MCF 10A (cell line): ENCODE measurements at regions of chr7 and their contacts with region 1.

Region 1: GRCh38 chr7:26853788-26854393 is 10.5 kb downstream of the SKAP2 start:
- DNase-seq: peak; percentile 78
- H3K4me3 Mint-ChIP-seq: peak overlapping the region; percentile 17
- H3K27ac Mint-ChIP-seq: peak overlapping the region; percentile 96
- H3K4me1 Mint-ChIP-seq: peaks cover 33% of the 10 kb centered on the region
- H3K27me3 Mint-ChIP-seq: no peaks in the 10 kb centered on the region
- CTCF ChIP-seq: peak; percentile 52

Region 2: GRCh38 chr7:26686448-26686981 is 167.4 kb before region 1 on chr7:
- CTCF ChIA-PET with region 1: interaction called, 14 read pairs
- POLR2A ChIA-PET with region 1: interaction called, 10 read pairs
- intact Hi-C with region 1: loop called (anchors 2 kb)
- DNase-seq: peak; percentile 51
- H3K4me3 Mint-ChIP-seq: no peak overlapping the region
- H3K27ac Mint-ChIP-seq: no peak overlapping the region
- H3K4me1 Mint-ChIP-seq: peaks cover 3% of the 10 kb centered on the region
- H3K27me3 Mint-ChIP-seq: no peaks in the 10 kb centered on the region
- CTCF ChIP-seq: peak; percentile 59

Region 3: DNA sequence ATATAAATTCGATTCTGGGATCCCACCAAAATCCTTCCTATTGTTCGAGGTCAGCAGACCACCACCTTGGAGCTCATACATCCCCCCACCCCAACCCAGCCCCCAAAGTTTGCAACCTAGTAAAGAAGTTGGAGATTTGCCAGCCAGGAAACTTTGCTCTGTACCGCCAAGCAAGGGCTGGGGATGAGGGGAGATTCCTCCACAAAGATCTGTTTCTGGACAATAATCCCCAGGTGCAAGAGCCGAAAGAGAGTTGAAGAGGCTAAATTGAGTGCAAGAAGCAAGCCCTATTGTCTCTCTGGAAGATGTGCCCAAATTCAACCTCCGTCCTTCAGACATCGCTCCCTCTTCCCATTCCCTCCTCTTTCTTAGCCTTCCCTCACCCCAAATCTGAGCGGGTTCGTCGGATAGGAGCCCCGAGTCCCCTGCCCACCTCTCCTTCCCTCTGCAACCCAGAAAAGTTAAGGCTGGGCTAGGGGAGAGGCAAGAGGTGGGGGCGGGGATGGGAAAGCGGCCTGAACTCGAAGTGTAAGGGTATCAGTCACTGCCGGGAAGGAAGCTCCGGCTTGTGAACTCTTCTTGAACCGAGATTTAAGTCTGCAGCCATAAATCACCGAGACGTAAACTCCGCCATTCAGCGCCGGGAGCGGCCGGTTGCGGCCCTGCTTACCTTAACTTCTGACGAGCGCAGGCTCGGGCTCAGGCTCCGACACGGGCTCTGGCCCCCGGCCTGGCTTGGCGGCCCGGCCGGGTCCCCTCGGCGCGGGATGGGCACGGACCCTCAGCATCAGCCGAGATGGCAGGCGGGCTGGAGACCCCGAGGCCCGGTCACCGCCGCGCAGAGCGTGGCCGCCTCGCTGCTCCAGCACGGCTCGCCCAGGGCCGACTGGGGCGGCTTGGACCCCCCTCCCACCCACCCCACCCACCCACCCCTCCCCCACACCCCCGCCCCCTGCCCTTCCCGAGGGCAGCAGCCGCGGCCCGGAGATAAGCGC is 259.4 kb after region 1 on chr7:
- CTCF ChIA-PET with region 1: interaction called, 12 read pairs
- POLR2A ChIA-PET with region 1: interaction called, 395 read pairs
- intact Hi-C with region 1: no loop called
- DNase-seq: peak; percentile 93
- H3K4me3 Mint-ChIP-seq: peak overlapping the region; percentile 80
- H3K27ac Mint-ChIP-seq: peak overlapping the region; percentile 90
- H3K4me1 Mint-ChIP-seq: peaks cover 25% of the 10 kb centered on the region
- H3K27me3 Mint-ChIP-seq: no peaks in the 10 kb centered on the region
- CTCF ChIP-seq: no peak

Region 4: DNA sequence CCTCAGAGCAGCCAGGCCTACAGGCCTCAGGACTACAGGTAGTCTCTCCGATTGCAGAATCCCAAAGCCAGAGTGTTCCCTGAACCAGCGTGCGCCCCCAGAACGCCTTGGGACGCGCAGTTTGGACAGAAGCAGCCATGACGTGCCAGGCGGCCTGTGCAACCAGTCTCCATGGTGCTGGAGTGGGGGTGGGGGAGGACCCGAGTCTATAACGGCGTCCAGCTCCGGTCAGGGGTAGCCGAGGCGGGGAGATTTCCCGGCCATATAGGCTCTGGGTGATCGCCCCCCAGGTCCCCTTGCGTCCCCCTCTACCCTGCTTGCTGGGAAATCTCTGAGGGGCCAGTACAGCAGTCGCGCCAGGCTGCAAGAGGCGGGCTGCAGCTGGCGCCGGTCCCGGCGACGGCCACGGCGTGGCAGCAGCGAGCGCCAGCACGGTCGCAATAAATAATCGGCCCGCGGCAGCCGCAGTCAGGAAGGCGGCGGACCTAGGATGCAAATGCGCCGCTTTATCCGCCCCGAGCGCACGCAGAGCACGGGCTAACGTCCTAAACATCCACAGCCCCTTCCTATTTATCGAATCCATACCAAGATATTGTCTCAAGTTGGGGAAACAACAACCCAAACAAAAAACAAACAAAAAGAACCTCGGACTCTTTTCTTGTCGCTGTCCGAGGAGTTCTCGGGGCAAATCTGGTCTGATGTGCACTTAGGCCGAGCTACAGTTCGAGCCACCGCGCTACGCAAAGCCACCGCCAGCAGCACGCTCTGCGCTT is 296.9 kb after region 1 on chr7:
- CTCF ChIA-PET with region 1: interaction called, 17 read pairs
- POLR2A ChIA-PET with region 1: interaction called, 459 read pairs
- intact Hi-C with region 1: no loop called
- DNase-seq: peak; percentile 72
- H3K4me3 Mint-ChIP-seq: peak overlapping the region; percentile 79
- H3K27ac Mint-ChIP-seq: no peak overlapping the region
- H3K4me1 Mint-ChIP-seq: peaks cover 15% of the 10 kb centered on the region
- H3K27me3 Mint-ChIP-seq: no peaks in the 10 kb centered on the region
- CTCF ChIP-seq: peak; percentile 89

Region 5: GRCh38 chr7:27172823-27173510 is 319.1 kb after region 1 on chr7:
- CTCF ChIA-PET with region 1: interaction called, 5 read pairs
- POLR2A ChIA-PET with region 1: interaction called, 59 read pairs
- intact Hi-C with region 1: no loop called
- DNase-seq: peak; percentile 55
- H3K4me3 Mint-ChIP-seq: peak overlapping the region; percentile 79
- H3K27ac Mint-ChIP-seq: peak overlapping the region; percentile 87
- H3K4me1 Mint-ChIP-seq: peaks cover 20% of the 10 kb centered on the region
- H3K27me3 Mint-ChIP-seq: no peaks in the 10 kb centered on the region
- CTCF ChIP-seq: no peak